ENCODE measurements at regions of chr2 and their contacts with region 1.

Region 1: DNA sequence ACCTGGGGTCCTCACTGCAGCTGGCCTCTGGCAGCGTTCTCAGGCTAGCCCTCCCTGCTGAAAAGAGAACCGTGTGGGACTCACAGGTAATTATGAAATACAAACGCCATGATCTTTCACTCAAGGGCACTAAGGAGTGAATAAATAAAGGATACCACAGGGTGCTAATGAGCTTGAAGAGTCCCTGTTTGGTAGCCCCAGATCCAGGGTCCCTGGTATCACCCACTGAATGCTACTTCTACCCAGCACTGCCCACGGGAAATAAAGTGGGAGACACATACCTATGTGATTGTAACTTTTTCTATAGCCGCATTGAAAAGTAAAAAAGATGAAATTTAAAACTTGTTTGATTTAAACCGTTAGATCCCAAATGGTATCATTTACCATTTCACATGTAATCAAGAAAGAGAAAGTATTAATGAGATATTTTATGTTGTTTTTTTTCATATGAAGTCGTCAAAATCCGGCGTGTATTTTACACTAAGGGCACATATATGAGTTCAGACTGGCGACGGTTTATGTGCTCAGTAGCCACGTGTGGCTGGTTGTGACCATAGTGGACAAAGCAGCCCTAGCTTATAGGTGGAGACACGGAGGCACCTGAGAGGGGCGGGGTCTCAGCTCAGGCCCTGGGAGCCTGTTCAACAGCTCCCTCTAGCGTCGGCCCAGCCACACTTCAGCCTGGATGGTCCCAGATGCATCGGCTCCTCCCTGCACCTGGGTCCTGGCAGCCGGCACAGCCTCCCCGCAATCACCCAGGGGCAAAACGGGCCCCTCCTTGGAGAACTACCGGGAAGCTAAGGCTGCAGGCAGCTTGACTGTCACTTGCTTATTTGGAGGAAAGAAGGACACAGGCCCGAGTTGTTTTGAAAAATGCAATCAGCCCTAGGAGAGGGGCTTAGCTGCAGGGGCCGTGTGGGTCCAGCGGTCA is 39.2 kb downstream of the ODC1 start:
- DNase-seq: peak; percentile 90
- H3K4me3 Mint-ChIP-seq: peak overlapping the region; percentile 58
- H3K27ac Mint-ChIP-seq: peak overlapping the region; percentile 72
- H3K4me1 Mint-ChIP-seq: peaks cover 53% of the 10 kb centered on the region
- H3K27me3 Mint-ChIP-seq: no peaks in the 10 kb centered on the region
- CTCF ChIP-seq: peak; percentile 97

Region 2: DNA sequence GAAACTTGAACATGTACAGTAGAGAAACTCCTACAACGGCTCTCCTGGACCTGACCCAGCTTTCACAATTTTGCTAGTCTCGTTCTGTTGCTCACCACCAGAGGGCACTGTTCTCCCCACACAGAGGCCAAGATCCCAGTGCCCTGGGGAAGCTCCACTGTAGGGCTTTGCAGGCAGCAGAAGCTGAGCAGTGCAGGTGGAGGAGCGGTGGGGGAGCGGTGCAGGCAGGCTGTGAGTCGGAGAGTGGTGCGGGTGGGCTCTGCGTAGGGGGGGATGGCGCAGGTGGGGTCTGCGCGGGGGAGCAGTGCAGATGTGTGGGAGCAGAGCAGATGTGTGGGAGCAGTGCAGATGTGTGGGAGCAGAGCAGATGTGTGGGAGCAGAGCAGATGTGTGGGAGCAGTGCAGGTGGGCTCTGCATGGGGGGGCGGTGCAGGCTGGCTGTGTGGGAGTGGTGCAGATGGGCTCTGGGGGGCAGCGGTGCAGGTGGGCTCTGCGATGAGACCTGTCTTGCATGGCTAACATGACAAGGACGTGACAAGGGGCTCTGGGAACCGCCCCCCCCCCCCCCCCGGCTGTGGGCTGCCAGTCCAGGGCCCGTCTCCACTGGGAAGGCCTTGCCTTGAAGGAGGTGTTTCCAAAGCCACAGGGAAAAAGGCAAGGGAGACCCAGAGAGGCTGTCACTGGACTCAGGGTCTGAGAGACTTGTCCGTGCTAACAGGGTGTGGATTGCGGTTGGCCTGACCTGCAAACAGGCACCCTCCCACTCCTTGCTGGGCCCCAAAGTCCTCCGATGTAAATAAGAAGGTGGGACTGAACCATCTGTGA is 336.0 kb before region 1 on chr2:
- CTCF ChIA-PET with region 1: interaction called, 32 read pairs
- POLR2A ChIA-PET with region 1: interaction called, 9 read pairs
- intact Hi-C with region 1: loop called (anchors 1 kb)
- DNase-seq: peak; percentile 87
- H3K4me3 Mint-ChIP-seq: no peak overlapping the region
- H3K27ac Mint-ChIP-seq: no peak overlapping the region
- H3K4me1 Mint-ChIP-seq: peaks cover 8% of the 10 kb centered on the region
- H3K27me3 Mint-ChIP-seq: peaks cover 46% of the 10 kb centered on the region
- CTCF ChIP-seq: peak; percentile 67

Region 3: DNA sequence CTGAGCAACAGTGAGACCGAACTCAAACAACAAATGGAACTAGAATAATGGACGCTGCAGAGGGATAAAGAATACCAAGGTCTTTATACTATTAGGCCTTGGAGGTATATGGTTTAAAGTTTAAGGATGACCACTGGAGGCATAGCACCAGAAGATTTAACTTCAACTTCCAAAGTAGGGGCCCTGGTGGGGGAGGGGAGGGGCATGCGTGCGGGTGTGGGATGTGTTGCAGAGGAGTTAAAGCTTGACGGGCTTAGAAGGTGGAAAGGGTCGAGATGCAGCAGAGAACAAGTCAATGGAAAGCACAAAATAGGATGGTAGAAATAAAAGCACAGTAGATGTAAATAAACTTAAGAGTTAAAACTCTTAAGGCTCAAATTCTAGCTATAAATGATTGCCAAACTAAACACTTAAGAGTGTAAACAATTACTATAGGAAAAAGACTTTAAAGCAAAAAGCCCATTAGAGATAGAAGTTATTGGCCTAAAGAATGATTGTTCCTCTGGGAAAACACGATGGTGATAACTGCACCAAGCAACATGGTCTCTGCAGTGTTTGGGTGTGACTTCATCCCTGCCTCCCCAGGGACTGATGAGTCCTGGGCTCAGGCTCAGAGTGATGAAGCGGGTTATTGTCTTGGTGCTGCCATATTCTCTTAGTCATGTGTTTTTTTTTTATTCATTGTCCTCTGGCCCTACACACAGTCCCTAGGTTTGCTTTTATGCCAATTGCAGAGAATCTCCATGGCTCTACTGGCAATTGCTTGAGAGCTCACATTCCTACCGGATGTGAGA is 273.4 kb before region 1 on chr2:
- CTCF ChIA-PET with region 1: interaction called, 85 read pairs
- POLR2A ChIA-PET with region 1: interaction called, 10 read pairs
- intact Hi-C with region 1: loop called (anchors 5 kb)
- DNase-seq: peak; percentile 57
- H3K4me3 Mint-ChIP-seq: no peak overlapping the region
- H3K27ac Mint-ChIP-seq: peak overlapping the region; percentile 66
- H3K4me1 Mint-ChIP-seq: peaks cover 19% of the 10 kb centered on the region
- H3K27me3 Mint-ChIP-seq: no peaks in the 10 kb centered on the region
- CTCF ChIP-seq: no peak

Region 4: DNA sequence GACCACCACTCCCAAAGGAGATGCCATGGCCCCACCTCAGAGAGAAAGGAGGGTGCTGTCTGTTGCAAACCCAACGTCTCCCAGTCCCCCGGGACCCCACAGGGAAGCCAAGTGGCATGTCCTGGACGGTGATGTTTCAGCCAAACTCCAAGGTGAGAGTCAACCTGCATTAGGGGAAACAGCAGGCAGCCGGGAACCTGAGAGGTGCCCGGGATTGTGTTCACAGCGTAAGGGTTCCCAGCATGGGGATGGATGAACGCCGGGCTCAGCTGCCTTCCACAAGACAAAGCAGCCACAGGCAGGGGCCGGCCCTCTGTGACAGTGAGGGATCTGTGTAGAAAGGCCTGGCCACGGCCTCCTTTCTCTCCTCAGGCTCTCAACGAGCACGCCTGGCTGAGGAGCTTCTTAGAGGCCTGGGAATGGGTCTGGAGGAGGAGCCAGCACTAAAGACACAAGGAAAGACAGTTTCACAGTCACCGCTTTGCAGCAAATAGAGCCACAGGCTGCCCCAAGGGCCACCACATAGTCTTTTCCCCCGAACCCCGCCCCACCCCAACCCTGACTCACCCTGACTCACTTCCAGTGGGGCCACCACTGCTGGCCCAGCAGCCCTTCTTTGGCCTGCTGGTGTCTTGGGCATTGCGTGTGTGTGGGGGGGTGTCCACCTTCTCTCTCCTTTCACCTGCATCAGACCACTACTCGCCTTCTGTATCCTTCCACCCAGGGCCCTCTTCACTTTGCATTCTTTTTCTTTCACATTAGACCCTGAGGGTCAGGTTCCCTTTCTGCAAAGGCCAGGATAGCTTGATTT is 125.8 kb before region 1 on chr2:
- CTCF ChIA-PET with region 1: interaction called, 10 read pairs
- POLR2A ChIA-PET with region 1: interaction called, 3 read pairs
- intact Hi-C with region 1: no loop called
- DNase-seq: peak; percentile 92
- H3K4me3 Mint-ChIP-seq: peak overlapping the region; percentile 35
- H3K27ac Mint-ChIP-seq: peak overlapping the region; percentile 75
- H3K4me1 Mint-ChIP-seq: peaks cover 53% of the 10 kb centered on the region
- H3K27me3 Mint-ChIP-seq: no peaks in the 10 kb centered on the region
- CTCF ChIP-seq: no peak

Region 5: DNA sequence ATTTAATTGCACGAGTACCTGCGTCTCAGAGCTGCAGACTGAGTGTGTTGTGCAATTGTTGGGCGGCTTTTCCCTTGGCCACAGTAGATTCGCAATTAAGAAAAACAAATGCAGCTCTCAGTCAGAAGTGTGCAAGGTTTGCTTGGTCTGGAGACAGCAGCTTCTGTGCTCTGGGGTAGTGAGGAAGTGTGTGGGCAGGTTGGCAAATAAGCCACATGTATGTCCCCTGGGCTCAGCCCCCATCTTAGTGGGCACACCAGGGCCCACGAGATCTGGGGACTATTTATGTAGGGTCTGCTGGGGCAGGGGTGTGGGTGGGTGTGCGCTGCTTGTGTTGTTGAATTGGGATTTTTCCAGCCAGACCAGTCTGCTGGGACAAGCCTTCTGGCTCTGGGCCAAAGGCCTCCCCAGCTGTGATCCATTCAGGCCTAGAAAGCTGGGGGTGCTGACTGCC is 28.8 kb before region 1 on chr2:
- CTCF ChIA-PET with region 1: interaction called, 14 read pairs
- POLR2A ChIA-PET with region 1: interaction called, 7 read pairs
- intact Hi-C with region 1: no loop called
- DNase-seq: peak; percentile 49
- H3K4me3 Mint-ChIP-seq: no peak overlapping the region
- H3K27ac Mint-ChIP-seq: peak overlapping the region; percentile 48
- H3K4me1 Mint-ChIP-seq: peaks cover 42% of the 10 kb centered on the region
- H3K27me3 Mint-ChIP-seq: no peaks in the 10 kb centered on the region
- CTCF ChIP-seq: no peak

Region 6: DNA sequence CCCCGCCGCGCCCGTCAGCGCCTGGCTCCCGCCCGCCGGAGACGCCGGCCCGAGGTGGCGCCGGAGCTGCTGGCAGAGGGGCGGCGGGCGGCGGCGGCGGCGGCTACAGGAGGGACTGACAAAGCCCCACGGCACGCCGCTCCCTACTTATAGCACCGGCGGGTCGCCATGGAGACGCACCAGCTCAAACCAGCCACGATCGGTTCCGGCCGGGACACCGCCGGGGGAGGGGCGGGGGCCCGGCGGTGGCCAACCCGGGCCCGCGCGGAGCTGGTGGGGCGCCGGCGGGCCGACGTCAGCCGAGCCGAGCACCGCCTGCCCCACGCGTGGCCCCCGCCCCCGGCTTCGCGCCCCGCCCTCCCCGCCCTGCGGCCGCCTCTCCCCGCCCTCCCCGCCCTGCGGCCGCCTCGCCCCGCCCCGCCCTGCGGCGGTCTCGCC is 39.3 kb after region 1 on chr2 and contains the start of gene ODC1:
- CTCF ChIA-PET with region 1: interaction called, 4 read pairs
- POLR2A ChIA-PET with region 1: interaction called, 19 read pairs
- intact Hi-C with region 1: no loop called
- DNase-seq: peak; percentile 86
- H3K4me3 Mint-ChIP-seq: peak within 1 kb of the TSS; percentile 93
- H3K27ac Mint-ChIP-seq: peak within 1 kb of the TSS; percentile 91
- H3K4me1 Mint-ChIP-seq: peaks cover 14% of the 10 kb centered on the region
- H3K27me3 Mint-ChIP-seq: no peaks in the 10 kb centered on the region
- CTCF ChIP-seq: no peak
- total RNA-seq, gene ODC1: 321 and 341 TPM in 2 replicates

Measured in MCF 10A (cell line).